Activated CD4-positive, alpha-beta memory T cell treated with anti-CD3 and anti-CD28 coated beads, Interleukin-2, amount 10 ng/mL, durations not matched to agents 7 days and 5 days (primary cell): ENCODE measurements at regions of chr7 and their contacts with region 1.

Region 1: DNA sequence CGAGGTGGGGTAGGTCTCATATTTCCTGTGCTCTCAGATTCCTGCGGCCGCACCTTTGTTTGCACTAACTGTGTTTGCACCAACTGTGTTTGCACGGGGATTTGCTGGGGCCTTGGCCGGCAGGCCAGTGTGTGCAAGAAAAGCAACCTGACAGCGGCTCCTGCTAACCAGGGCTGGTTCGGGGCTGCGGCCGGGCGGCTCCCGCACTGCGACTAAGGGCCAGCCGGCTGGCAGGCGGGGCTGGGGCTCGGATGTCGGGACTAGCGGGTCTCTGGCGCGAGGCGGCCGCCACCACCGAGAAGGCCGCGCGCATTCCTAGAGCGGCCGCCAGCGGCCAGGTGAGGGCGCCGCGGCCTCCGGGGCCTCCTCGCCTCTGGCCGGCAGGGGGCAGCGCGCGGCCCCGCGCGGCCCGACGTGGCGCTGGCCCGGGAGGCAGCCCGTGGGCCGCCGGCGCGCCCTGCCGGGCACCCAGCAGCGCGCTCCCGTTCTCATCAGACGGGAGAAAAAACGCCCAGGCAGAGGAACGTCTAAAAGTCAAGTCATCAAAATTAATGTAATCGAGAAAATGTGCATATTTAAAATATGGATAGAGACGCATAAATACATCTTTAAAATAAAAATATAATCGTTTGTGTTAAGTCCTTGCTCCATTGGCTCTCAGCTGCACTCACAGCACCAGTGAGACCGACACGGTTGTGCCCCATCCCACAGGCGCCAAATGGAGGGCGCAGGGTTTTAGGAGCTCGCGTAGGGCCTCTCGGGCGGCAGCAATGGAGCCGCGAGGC is 38.5 kb downstream of the ZNF777 start:
- DNase-seq: peak; percentile 77
- H3K4me3 Mint-ChIP-seq: peak overlapping the region; percentile 69
- H3K27ac Mint-ChIP-seq: peak overlapping the region; percentile 35
- H3K4me1 Mint-ChIP-seq: peaks cover 7% of the 10 kb centered on the region
- H3K27me3 Mint-ChIP-seq: peaks cover 3% of the 10 kb centered on the region

Region 2: GRCh38 chr7:149440222-149440621 is 17.9 kb after region 1 on chr7:
- CTCF ChIA-PET with region 1: interaction called, 16 read pairs
- POLR2A ChIA-PET with region 1: interaction called, 3 read pairs
- DNase-seq: no peak
- H3K4me3 Mint-ChIP-seq: no peak overlapping the region
- H3K27ac Mint-ChIP-seq: peak overlapping the region; percentile 19
- H3K4me1 Mint-ChIP-seq: peaks cover 18% of the 10 kb centered on the region
- H3K27me3 Mint-ChIP-seq: no peaks in the 10 kb centered on the region

Region 3: DNA sequence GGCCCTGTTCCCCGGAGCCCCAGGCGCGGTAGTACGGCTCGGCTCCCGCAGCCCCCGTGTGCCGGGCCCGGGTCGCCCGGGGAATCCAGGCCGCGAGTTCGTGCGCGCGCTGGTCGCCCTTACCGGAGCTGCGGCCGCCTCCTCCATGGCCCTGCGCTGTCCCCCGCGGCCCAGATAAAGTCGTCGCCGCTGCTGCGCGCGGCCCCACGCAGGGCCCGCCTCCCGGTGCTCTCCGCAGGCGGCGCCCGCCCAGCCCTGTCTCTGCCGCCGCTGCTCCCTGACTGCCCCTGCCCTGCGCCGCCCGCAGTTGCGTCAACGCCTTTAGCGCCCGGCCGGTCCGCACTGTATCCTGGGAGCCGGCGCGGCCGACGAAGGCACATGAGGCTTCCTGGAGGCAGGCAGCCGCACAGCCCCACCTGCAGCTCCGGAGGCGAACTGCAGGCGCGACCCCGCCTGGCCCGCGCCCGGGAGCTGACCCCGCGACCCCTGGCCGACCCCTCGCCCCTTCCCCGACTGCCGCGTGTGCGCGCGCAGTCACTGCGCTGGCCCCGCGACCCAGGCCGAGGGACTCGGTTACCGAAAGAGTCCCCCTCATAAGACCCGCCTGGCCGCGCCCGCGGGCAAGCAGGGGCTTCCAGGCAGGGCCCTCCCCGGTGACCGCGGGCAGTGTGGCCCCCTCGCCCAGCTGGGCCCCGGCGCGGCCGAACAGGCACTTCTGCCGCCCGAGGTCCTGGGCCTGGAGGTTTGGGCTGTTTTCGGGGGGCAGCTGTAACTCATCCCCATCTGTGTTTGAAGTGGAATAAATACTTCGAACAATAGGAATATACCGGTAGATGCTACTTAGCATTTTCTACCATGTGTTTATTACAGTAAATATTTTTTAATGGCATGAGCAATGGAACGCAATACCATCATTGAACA is 202.4 kb after region 1 on chr7:
- CTCF ChIA-PET with region 1: interaction called, 12 read pairs
- POLR2A ChIA-PET with region 1: no interaction called
- DNase-seq: peak; percentile 94
- H3K4me3 Mint-ChIP-seq: peak overlapping the region; percentile 95
- H3K27ac Mint-ChIP-seq: peak overlapping the region; percentile 72
- H3K4me1 Mint-ChIP-seq: peaks cover 41% of the 10 kb centered on the region
- H3K27me3 Mint-ChIP-seq: peaks cover 24% of the 10 kb centered on the region